ENCODE measurements at regions of chr4 and their contacts with region 1.

Region 1: GRCh38 chr4:89226665-89227574 is 80.7 kb downstream of the GPRIN3 start:
- DNase-seq: peak; percentile 75 to 93 (median 87)
- H3K4me3 ChIP-seq: no peak overlapping the region
- H3K27ac ChIP-seq: no peak overlapping the region
- H3K4me1 ChIP-seq: peaks cover 0 to 2% (median 0%) of the 10 kb centered on the region in 3 donors
- H3K27me3 ChIP-seq: no peaks in the 10 kb centered on the region
- CTCF ChIP-seq: peak; percentile 86

Region 2: GRCh38 chr4:89434364-89434988 is 207.6 kb after region 1 on chr4:
- intact Hi-C with region 1: loop called (anchors 5 kb)
- DNase-seq: peak in 2 of 5 donors; percentile 49 to 71
- H3K4me3 ChIP-seq: no peak overlapping the region
- H3K27ac ChIP-seq: no peak overlapping the region
- H3K4me1 ChIP-seq: no peaks in the 10 kb centered on the region
- H3K27me3 ChIP-seq: no peaks in the 10 kb centered on the region
- CTCF ChIP-seq: peak; percentile 77